CD8-positive, alpha-beta T cell (primary cell): ENCODE measurements at regions of chr9 and their contacts with region 1.

Region 1: DNA sequence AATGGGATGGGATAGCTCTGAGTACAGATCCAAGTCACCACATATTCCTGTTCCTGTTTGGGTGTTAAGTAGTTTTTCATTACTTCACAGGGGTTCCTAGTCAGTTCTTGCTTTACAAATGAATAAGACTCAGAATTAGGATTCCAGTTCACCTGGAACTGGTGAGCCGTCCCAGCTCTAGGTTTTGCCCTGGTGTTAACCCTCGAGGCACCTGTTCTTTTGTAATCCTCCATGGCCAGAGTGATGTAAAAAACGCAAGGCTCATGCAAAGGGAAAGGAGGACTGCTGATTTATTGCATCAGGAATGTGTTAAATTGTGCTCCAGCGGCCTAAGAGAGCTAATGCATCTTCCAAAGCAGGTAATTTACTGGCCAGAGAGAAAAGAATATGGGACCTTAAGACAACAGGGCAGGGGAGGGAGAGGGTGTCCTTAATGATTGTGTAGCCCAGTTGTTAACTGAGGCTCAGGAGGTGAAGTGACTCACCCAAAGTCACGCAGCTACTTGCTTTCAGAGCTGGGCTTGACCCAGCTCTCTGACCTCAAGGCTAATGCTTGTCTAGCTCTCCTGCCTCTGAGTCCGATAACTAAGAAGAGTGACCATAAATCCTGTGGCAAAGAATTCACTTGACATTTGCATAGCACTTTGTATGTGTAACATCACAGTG is 70.5 kb downstream of the DMRT2 start:
- DNase-seq: no peak
- ATAC-seq: no peak
- H3K4me3 ChIP-seq: no peak overlapping the region
- H3K4me3 Mint-ChIP-seq: no peak overlapping the region
- H3K27ac ChIP-seq: no peak overlapping the region
- H3K27ac Mint-ChIP-seq: no peak overlapping the region
- H3K4me1 ChIP-seq: no peaks in the 10 kb centered on the region
- H3K4me1 Mint-ChIP-seq: no peaks in the 10 kb centered on the region
- H3K27me3 ChIP-seq: no peaks in the 10 kb centered on the region
- H3K27me3 Mint-ChIP-seq: peaks cover 3% of the 10 kb centered on the region
- CTCF ChIP-seq: no peak

Region 2: GRCh38 chr9:935344-935965 is 185.2 kb before region 1 on chr9:
- CTCF ChIA-PET with region 1: no interaction called
- POLR2A ChIA-PET with region 1: no interaction called
- intact Hi-C with region 1: no loop called
- DNase-seq: no peak
- ATAC-seq: no peak
- H3K4me3 ChIP-seq: no peak overlapping the region
- H3K4me3 Mint-ChIP-seq: no peak overlapping the region
- H3K27ac ChIP-seq: no peak overlapping the region
- H3K27ac Mint-ChIP-seq: no peak overlapping the region
- H3K4me1 ChIP-seq: no peaks in the 10 kb centered on the region
- H3K4me1 Mint-ChIP-seq: no peaks in the 10 kb centered on the region
- H3K27me3 ChIP-seq: peaks cover 0 to 2% of the 10 kb centered on the region in 2 experiments
- H3K27me3 Mint-ChIP-seq: peaks cover 36% of the 10 kb centered on the region
- CTCF ChIP-seq: no peak

Region 3: DNA sequence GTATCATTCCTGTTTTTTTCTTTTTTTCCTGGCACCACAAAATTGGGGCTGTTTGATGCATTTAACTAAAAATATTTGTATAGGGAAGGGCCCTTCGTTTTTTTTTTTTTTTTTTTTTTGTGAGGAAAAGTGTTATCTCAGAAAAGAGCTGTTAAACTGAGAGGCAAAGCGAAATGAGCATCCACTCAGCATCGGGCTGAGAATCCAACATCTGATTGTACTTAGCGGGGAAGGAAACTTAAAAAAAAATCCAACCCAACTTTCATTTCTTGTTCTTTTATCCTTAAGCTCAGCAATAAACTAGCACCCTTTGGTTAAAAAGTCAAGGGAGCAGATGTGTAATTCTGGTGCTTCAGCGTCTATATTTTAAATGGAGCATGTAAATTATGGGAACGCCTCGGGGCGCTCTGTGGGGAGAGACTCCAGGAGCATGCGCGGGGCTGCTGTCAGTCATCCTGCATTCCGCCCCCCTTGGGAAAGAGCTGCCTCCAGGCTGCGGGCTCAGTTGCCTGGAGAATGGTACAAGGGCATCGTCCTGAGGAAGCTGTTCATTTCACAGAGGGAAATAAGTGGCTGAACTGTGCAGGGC is 37.2 kb before region 1 on chr9:
- CTCF ChIA-PET with region 1: no interaction called
- POLR2A ChIA-PET with region 1: no interaction called
- intact Hi-C with region 1: loop called in 1 of 2 experiments (anchors 1 kb)
- DNase-seq: no peak
- ATAC-seq: no peak
- H3K4me3 ChIP-seq: no peak overlapping the region
- H3K4me3 Mint-ChIP-seq: no peak overlapping the region
- H3K27ac ChIP-seq: no peak overlapping the region
- H3K27ac Mint-ChIP-seq: no peak overlapping the region
- H3K4me1 ChIP-seq: no peaks in the 10 kb centered on the region
- H3K4me1 Mint-ChIP-seq: no peaks in the 10 kb centered on the region
- H3K27me3 ChIP-seq: peaks cover 0 to 2% of the 10 kb centered on the region in 2 experiments
- H3K27me3 Mint-ChIP-seq: peaks cover 18% of the 10 kb centered on the region
- CTCF ChIP-seq: no peak

Region 4: DNA sequence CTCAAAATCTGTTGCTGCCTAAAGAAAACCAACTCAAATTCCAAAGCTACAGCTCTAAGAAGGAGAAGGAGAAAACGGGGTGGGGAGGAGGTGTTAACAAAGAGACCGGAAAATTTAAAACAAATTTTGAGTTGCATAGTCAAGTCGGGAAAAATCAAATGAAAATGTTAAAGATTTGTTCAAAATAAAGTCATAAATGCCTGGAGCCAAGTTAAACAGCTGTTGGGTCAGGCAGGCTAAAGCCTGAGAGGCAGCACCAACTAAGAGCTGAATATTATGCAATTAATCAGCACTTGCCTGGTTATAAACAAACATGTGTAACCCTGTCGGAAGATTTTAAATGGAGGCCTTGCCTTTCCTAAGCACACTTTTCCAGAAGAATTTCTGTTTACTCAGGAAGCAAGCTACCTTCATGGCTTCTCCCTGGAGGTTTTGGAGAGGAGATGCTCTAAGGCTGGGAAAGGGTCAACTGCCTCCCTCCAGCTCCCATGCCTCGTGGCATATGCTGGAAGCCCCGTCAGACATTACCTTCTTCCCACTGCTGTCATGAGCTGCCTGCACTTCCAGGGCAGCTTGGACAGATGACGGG is 200.1 kb after region 1 on chr9:
- CTCF ChIA-PET with region 1: no interaction called
- POLR2A ChIA-PET with region 1: no interaction called
- intact Hi-C with region 1: no loop called
- DNase-seq: no peak
- ATAC-seq: no peak
- H3K4me3 ChIP-seq: no peak overlapping the region
- H3K4me3 Mint-ChIP-seq: no peak overlapping the region
- H3K27ac ChIP-seq: no peak overlapping the region
- H3K27ac Mint-ChIP-seq: no peak overlapping the region
- H3K4me1 ChIP-seq: no peaks in the 10 kb centered on the region
- H3K4me1 Mint-ChIP-seq: no peaks in the 10 kb centered on the region
- H3K27me3 ChIP-seq: no peaks in the 10 kb centered on the region
- H3K27me3 Mint-ChIP-seq: no peaks in the 10 kb centered on the region
- CTCF ChIP-seq: no peak